T-cell (primary cell): ENCODE measurements at regions of chr18 and their contacts with region 1.

Region 1: GRCh38 chr18:63207835-63208234 is 111.7 kb downstream of the BCL2 start:
- DNase-seq: no peak
- ATAC-seq: no peak
- H3K4me3 ChIP-seq: peak overlapping the region in 1 of 2 donors; percentile 16
- H3K4me3 Mint-ChIP-seq: peak overlapping the region; percentile 67 to 85 (median 75)
- H3K27ac ChIP-seq: peak overlapping the region; percentile 57
- H3K27ac Mint-ChIP-seq: peak overlapping the region; percentile 92 to 94
- H3K4me1 ChIP-seq: peaks cover 53 to 79% of the 10 kb centered on the region in 2 experiments
- H3K4me1 Mint-ChIP-seq: peaks cover 96 to 100% (median 96%) of the 10 kb centered on the region in 3 donors
- H3K27me3 ChIP-seq: no peaks in the 10 kb centered on the region
- H3K27me3 Mint-ChIP-seq: no peaks in the 10 kb centered on the region

Region 2: GRCh38 chr18:63079114-63079513 is 128.7 kb before region 1 on chr18:
- CTCF ChIA-PET with region 1: no interaction called
- POLR2A ChIA-PET with region 1: no interaction called
- DNase-seq: peak in 1 of 35 experiments; percentile 12
- ATAC-seq: peak; percentile 35 to 73 (median 48)
- H3K4me3 ChIP-seq: no peak overlapping the region
- H3K4me3 Mint-ChIP-seq: no peak overlapping the region
- H3K27ac ChIP-seq: no peak overlapping the region
- H3K27ac Mint-ChIP-seq: no peak overlapping the region
- H3K4me1 ChIP-seq: peaks cover 3 to 4% of the 10 kb centered on the region in 2 experiments
- H3K4me1 Mint-ChIP-seq: peaks cover 9 to 13% (median 11%) of the 10 kb centered on the region in 3 donors
- H3K27me3 ChIP-seq: no peaks in the 10 kb centered on the region
- H3K27me3 Mint-ChIP-seq: peaks cover 4 to 6% of the 10 kb centered on the region in 2 donors

Region 3: DNA sequence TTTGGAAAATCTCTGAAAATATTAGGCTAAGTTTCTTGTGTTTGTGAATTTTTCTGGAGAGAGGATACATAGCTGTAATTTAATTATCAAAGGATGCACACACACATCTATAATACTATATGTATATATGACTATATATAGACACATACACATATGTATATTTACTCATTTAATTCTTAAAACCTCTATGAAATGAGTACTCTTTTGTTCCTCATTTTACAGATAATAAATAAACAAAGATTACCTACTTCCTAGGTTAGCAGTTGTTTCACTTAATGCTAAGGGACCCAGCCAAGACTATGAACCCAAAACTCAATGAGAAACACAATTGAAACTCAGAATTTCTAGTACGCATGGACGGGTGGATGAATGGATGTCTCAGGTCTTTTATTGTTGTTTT is 33.9 kb before region 1 on chr18:
- CTCF ChIA-PET with region 1: no interaction called
- POLR2A ChIA-PET with region 1: interaction called in 1 of 2 experiments, 11 read pairs
- DNase-seq: no peak
- ATAC-seq: no peak
- H3K4me3 ChIP-seq: no peak overlapping the region
- H3K4me3 Mint-ChIP-seq: no peak overlapping the region
- H3K27ac ChIP-seq: no peak overlapping the region
- H3K27ac Mint-ChIP-seq: peak overlapping the region; percentile 73 to 75
- H3K4me1 ChIP-seq: no peaks in the 10 kb centered on the region
- H3K4me1 Mint-ChIP-seq: peaks cover 55 to 72% (median 64%) of the 10 kb centered on the region in 3 donors
- H3K27me3 ChIP-seq: no peaks in the 10 kb centered on the region
- H3K27me3 Mint-ChIP-seq: no peaks in the 10 kb centered on the region